Heart right ventricle (tissue), 16 donors: ENCODE measurements at regions of chr19 and their contacts with region 1.

Region 1: DNA sequence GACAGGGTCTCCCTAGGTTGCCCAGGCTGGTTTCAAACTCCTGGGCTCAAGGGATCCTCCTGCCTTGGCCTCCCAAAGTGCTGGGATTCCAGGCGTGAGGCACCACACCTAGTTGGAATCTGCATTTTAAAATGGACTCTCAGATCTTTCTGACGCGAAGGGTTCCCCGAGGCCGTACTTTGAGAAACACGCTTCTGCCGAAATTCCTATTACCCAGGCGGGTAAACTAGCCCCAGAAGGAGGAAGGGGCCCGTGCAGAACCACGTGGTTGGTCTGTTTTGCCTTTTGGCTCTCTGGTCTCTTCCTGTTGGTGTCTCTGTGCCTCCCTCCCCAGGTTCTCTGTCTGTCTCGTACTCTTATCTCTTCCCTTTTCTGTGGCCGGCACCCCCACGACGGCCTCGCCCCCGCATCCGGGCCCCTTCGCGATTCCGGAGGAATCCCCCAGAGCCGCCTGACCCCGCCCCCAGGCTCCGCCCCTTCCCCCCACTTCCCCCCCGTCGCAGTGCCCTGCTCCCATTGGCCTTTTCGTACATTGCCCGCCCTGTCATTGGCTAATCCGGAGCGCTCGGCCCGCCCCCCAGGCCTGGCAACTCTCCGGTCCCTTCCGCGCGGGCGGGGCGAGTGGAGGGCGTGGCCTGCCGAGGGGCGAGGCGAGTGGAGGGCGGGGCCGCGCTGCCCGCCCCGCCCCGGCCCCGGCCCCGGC is at the start of gene TNFAIP8L1:
- DNase-seq: peak; percentile 97 to 98
- ATAC-seq: peak; percentile 92 to 96 (median 94)
- H3K4me3 ChIP-seq: peak within 1 kb of the TSS; percentile 49 to 89 (median 81)
- H3K27ac ChIP-seq: peak within 1 kb of the TSS; percentile 18 to 92 (median 86)
- H3K4me1 ChIP-seq: peaks cover 7 to 74% (median 58%) of the 10 kb centered on the region in 9 donors
- H3K27me3 ChIP-seq: peaks cover 0 to 5% (median 0%) of the 10 kb centered on the region in 7 donors
- CTCF ChIP-seq: no peak
- total RNA-seq, gene TNFAIP8L1: 2.5 to 13.4 (median 6.1) TPM

Region 2: DNA sequence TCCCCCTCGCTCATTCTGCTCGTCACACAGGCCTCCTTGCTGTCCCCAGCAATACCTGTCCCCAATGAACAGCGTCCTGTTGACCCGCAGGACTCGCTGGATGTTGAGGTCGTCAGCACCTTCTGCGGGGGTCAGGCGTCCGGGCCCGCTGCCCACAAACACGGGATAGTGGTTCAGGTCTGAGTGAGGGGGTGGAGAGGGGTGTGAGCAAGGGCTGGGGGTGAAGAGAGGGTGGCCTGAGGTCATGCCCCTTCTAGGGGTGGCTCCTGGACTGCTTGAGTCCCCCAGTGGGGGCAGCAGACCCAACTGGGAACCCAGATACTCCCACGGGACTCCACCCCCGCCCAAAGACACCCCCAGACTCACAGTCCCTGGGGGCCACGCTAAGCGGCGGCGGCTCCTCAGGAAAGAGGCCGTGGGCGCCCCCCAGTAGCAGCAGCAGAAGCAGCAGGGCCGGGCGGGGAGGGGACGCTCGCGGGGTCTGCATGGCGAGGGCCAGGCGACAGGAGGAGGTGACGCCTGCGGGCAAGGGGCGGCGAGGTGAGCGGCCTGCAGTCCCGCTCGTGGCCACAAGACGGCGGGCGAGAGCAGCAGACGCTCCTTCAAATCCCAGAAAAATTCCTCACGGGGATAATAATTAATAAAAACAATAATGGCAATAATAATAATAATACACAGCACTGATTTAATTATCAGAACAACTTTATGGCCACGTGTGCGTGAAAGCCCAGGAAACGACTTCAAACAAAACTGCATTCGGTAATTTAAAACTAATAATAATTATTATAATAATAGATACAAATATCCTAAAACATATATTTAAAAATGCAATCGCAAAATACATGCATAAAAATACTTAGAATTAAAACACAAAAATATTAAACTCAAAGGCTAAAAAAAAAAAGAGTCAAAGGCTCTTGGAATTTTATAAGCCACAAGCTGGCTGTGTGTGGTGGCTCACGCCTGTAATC is 80.7 kb before region 1 on chr19:
- intact Hi-C with region 1: loop called in 7 of 10 experiments (anchors 1 to 5 kb)
- DNase-seq: no peak
- ATAC-seq: peak in 1 of 8 donors; percentile 18
- H3K4me3 ChIP-seq: peak overlapping the region; percentile 28 to 65 (median 55)
- H3K27ac ChIP-seq: peak overlapping the region in 9 of 10 donors; percentile 22 to 93 (median 87)
- H3K4me1 ChIP-seq: peaks cover 0 to 37% (median 11%) of the 10 kb centered on the region in 9 donors
- H3K27me3 ChIP-seq: no peaks in the 10 kb centered on the region
- CTCF ChIP-seq: peak in 8 of 9 donors; percentile 97 to 100 (median 99)

Region 3: GRCh38 chr19:4576016-4576933 is 62.7 kb before region 1 on chr19:
- intact Hi-C with region 1: loop called (anchors 1 to 10 kb)
- DNase-seq: peak; percentile 67 to 80
- ATAC-seq: peak; percentile 39 to 73 (median 56)
- H3K4me3 ChIP-seq: no peak overlapping the region
- H3K27ac ChIP-seq: peak overlapping the region; percentile 51 to 90 (median 84)
- H3K4me1 ChIP-seq: peaks cover 0 to 42% (median 26%) of the 10 kb centered on the region in 9 donors
- H3K27me3 ChIP-seq: peaks cover 5 to 68% (median 41%) of the 10 kb centered on the region in 7 donors
- CTCF ChIP-seq: peak; percentile 27 to 76 (median 70)

Region 4: GRCh38 chr19:4589579-4590410 is 49.2 kb before region 1 on chr19:
- intact Hi-C with region 1: loop called in 1 of 10 experiments (anchors 10 kb)
- DNase-seq: no peak
- ATAC-seq: peak in 7 of 8 donors; percentile 48 to 94 (median 73)
- H3K4me3 ChIP-seq: no peak overlapping the region
- H3K27ac ChIP-seq: no peak overlapping the region
- H3K4me1 ChIP-seq: peaks cover 0 to 4% (median 3%) of the 10 kb centered on the region in 9 donors
- H3K27me3 ChIP-seq: peaks cover 3 to 54% (median 14%) of the 10 kb centered on the region in 7 donors
- CTCF ChIP-seq: peak in 8 of 9 donors; percentile 23 to 56 (median 45)